ENCODE measurements at regions of chr19 and their contacts with region 1.

Region 1: DNA sequence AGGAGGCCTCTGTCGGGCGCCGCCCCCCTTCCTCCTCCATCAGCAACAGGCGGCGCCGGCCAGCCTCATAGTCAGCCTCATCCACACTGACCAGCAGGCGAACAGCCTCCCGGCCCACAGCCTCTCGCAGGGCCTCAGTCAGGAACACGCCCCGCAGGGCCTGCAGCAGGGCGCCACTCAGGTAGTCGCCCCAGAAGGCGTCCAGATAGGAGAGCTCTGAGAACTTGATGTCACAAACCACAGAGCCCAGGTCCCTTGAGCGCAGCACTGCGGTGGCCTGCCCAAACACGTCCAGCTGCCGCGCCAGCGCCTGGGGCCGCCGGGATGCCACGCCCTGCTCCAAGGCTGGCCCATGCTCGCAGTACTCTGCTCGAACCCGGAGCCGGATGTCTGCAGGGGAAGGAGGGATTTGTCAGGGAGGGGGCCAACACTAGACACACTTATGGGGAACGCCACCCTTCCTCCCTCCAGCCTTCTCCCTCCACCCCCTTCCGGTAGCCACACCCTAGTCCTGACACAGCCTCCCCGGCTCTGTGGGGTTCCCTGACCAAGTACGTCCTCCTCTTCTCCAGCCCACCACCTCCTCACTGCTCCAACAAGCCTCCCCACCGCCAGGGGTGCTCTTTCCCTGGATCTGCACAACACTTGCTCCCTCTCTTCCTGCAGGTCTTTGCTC is 17.9 kb downstream of the DEDD2 start:
- DNase-seq: peak; percentile 68 to 87 (median 75)
- H3K4me3 ChIP-seq: peak overlapping the region in 6 of 7 experiments; percentile 27 to 60 (median 53)
- H3K27ac ChIP-seq: peak overlapping the region; percentile 12 to 55
- H3K4me1 ChIP-seq: peaks cover 35 to 78% (median 70%) of the 10 kb centered on the region in 4 experiments
- H3K27me3 ChIP-seq: no peaks in the 10 kb centered on the region

Region 2: DNA sequence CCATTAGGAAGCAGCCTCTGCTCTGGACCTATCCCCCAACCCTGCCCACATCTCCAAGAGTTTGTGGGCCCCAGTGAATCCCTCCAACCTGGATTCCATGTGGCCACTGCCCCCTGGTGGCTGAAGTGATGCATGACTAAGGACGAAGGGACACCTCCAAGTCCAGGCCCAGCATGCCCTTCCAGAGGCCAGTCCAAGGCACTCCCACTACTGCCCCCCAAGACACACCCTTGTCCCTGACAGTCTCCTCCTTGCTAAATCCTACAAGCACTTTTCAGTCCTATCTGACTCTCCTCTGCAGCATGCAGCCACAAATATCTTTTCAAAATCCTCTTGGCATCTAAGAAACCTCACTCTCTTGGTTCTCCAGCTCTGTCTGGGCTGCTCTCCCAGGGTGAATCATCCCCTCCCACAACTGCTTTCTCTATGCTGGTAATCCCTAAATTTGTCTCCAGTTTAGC is 15.1 kb before region 1 on chr19:
- CTCF ChIA-PET with region 1: interaction called, 35 read pairs
- POLR2A ChIA-PET with region 1: no interaction called
- DNase-seq: peak; percentile 59 to 75 (median 70)
- H3K4me3 ChIP-seq: no peak overlapping the region
- H3K27ac ChIP-seq: no peak overlapping the region
- H3K4me1 ChIP-seq: peaks cover 7 to 33% (median 27%) of the 10 kb centered on the region in 4 experiments
- H3K27me3 ChIP-seq: peaks cover 0 to 17% (median 8%) of the 10 kb centered on the region in 5 experiments

Region 3: GRCh38 chr19:42219812-42220750 is 20.5 kb after region 1 on chr19 and contains the start of gene ZNF526:
- CTCF ChIA-PET with region 1: interaction called, 18 read pairs
- POLR2A ChIA-PET with region 1: interaction called, 4 read pairs
- DNase-seq: peak; percentile 98 to 99 (median 98)
- H3K4me3 ChIP-seq: peak within 1 kb of the TSS; percentile 71 to 92 (median 83)
- H3K27ac ChIP-seq: peak within 1 kb of the TSS; percentile 75 to 92
- H3K4me1 ChIP-seq: peaks cover 7 to 52% (median 41%) of the 10 kb centered on the region in 4 experiments
- H3K27me3 ChIP-seq: no peaks in the 10 kb centered on the region

Region 4: GRCh38 chr19:42253245-42254088 is 53.9 kb after region 1 on chr19:
- CTCF ChIA-PET with region 1: no interaction called
- POLR2A ChIA-PET with region 1: no interaction called
- DNase-seq: peak in 2 of 3 donors; percentile 57 to 70
- H3K4me3 ChIP-seq: peak overlapping the region; percentile 29 to 96 (median 89)
- H3K27ac ChIP-seq: peak overlapping the region; percentile 54 to 89
- H3K4me1 ChIP-seq: peaks cover 0 to 52% (median 47%) of the 10 kb centered on the region in 4 experiments
- H3K27me3 ChIP-seq: no peaks in the 10 kb centered on the region

Measured in common myeloid progenitor, CD34-positive (primary cell).